ENCODE measurements at regions of chr17 and their contacts with region 1.

Region 1: GRCh38 chr17:21043286-21044232 is 748 bp upstream of the USP22 start:
- DNase-seq: peak; percentile 94 to 100 (median 98)

Region 2: DNA sequence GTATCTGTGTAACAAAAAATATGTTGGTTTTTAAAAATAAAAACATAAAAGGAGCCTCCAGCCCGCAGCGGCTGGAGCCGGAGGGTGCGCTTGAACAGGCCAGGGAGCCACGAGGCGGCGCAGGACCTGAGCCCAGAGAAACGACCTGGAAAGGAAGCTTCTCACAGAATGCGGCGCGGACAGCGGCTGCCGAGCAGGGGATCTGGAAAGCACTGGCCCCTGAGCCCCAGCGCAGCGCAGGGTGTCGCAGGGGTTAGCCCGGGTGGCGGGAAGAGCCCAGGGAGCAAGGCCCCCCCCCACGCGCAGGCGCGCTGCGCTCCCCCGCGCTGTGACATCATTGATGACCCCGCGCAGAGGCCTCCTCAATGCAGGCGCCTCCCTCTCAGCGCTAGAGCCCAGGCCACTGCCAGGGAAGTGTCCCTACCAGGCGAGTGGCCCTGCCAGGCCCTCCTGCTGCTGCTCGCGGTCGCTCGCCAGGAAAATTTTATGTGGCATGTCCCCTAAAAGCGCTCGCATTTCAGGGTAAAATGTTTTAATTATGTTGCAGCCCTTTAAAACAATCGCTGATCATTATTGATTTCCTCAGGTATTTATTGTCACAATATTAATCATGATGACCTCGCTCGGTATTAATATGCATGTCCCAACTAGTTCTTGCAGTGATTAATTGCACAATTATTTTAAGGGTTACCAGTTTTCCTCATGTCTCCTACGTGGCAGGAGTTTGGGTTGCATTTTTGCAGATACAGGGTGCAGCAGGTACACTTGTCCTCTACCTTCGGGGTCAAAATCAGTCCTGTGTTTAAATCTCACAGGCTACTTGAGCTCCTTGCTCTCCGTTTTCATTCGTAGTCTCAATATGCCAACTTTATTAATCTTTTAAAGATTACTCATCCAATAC is 134.9 kb before region 1 on chr17:
- intact Hi-C with region 1: loop called (anchors 1 kb)
- DNase-seq: peak; percentile 81 to 99 (median 92)

Region 3: GRCh38 chr17:21001813-21002221 is 41.7 kb before region 1 on chr17:
- intact Hi-C with region 1: loop called (anchors 5 kb)
- DNase-seq: peak in 8 of 10 donors; percentile 24 to 92 (median 53)

Region 4: DNA sequence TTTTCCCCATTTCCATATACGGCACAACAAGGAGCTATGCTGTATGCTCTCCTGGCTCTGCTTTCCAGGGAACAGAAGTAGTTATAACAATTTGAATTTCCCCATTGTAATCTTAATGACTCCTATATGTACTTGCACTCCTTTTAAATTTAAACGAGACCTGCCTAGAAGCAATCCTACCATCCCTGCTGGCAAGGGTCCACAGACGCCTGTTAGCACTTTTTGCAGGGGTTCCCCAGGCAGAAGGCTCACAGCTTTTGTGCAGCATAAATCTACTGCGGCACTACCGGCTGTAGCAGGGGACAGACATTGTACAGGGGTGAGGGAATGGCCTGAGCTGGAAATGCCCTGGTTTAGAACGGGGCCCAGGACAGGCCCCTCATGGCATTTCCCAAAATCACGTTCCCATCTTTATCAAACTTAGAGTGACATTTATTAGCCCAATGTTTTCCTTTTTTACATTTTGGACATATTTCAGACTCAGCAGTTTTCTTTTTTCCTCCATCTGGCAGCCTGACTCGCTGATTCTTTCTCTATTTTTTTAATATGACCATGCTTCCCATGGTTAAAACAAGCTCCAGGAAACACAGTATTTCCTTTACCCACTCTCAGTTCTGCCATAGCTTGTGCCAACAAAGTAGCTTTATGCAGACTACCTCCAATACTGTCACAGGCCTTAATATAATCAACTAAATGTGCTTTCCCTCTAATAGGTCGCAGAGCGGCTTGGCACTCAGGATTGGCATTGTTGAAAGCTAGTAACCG is 34.6 kb after region 1 on chr17:
- intact Hi-C with region 1: loop called (anchors 5 kb)
- DNase-seq: peak in 1 of 10 donors; percentile 72

Region 5: DNA sequence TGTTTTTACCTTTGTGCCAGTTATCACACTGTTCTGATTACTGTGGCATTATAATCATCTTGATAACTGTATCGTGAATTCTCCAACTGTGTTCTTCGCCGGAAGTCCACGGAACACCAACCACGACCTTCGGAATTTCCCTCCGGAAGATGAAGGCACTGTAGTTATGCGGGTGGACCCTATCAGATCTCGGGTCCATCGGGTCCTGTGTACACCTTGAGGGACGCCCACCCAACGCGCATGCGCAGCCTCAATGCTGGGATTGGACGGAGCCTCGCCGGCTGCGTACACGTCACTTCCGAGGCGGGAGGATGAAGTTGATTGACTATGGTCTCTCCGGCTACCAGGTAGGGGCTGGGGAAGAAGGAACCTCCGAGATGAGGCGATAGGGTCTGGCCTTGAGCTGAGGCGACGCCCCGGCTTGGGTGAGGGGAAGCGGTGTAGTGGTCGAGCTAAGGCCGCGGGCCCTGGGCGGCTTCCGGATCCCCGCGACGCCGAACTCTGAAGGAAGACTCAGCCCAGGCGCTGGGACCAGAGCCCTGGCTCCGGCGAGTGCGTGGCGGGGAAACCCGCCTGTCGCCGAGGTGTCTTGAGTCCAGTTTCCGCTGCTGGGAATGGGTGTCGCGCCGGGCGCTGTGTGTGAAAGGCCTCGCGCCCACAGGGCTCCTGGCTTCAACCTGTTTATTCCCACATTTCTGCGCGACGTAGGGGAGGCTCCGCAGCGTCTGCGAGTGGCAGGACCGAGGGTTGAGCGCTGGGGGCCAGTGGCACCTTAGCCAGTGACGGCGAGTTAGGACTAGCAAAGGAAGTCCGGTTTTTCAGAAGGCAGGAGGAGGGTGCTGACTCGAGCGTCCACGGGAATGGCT is 83.3 kb after region 1 on chr17 and contains the start of gene DHRS7B:
- intact Hi-C with region 1: loop called (anchors 2 kb)
- DNase-seq: peak; percentile 93 to 99 (median 96)

Region 6: GRCh38 chr17:21214015-21214776 is 170.6 kb after region 1 on chr17 and contains the start of gene TMEM11:
- intact Hi-C with region 1: loop called (anchors 10 kb)
- DNase-seq: peak; percentile 89 to 100 (median 97)

Region 7: GRCh38 chr17:21284319-21285163 is 241.0 kb after region 1 on chr17 and contains the start of gene MAP2K3:
- intact Hi-C with region 1: loop called (anchors 5 kb)
- DNase-seq: peak; percentile 99 to 100 (median 100)

Measured in posterior cingulate gyrus (tissue), 11 donors.